PC-9 (cell line): ENCODE measurements at regions of chr12 and their contacts with region 1.

Region 1: GRCh38 chr12:32091696-32092095 is 15.0 kb upstream of the BICD1 start:
- DNase-seq: no peak
- H3K4me3 ChIP-seq: no peak overlapping the region
- H3K27ac ChIP-seq: no peak overlapping the region
- H3K4me1 ChIP-seq: peaks cover 12% of the 10 kb centered on the region
- H3K27me3 ChIP-seq: no peaks in the 10 kb centered on the region
- CTCF ChIP-seq: no peak

Region 2: GRCh38 chr12:30862486-30862885 is 1229.2 kb before region 1 on chr12:
- CTCF ChIA-PET with region 1: no interaction called
- POLR2A ChIA-PET with region 1: no interaction called
- intact Hi-C with region 1: no loop called
- DNase-seq: no peak
- H3K4me3 ChIP-seq: no peak overlapping the region
- H3K27ac ChIP-seq: no peak overlapping the region
- H3K4me1 ChIP-seq: no peaks in the 10 kb centered on the region
- H3K27me3 ChIP-seq: 0 out of 2 replicates have a peak, but pooled peaks cover 6% of the 10 kb centered on the region
- CTCF ChIP-seq: no peak

Region 3: DNA sequence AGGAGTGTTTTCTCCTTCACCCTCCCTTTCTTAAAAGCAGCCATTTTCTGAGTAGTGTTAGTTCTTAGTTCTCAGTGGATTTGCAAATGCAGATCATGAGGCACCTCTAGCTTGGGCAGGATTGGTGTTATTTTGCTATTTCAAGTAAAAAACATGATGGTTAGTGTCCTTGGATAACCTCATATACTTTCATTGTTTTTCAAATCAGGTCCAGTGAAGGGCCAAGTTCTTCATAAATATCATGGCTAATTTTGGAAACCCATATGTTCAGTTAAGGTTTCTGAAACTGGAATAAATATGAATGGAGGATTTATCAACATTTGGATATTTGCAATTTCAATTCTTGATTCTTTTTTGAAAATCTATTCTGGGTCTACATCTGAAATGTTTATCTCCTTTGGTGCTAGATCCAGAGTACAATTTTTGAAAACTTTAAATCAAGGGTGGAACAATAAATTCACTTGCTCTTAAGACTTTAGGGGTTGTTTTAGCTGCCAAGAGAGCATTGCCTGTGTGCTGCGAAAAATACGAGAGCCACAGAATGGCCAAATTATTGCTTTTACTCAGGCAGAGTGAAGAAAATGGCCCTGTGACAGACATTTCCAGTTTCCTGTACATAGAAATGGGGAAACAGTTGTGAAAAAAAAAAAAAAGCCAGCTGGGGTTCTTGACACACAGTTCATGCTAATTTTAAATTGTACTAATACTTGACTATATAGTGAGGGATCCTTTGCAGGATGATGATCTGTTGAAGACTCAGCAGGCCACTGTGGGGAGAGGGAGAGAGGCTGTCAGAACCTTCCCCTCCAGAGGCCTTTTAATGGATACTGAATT is 119.6 kb after region 1 on chr12:
- CTCF ChIA-PET with region 1: no interaction called
- POLR2A ChIA-PET with region 1: interaction called, 14 read pairs
- intact Hi-C with region 1: no loop called
- DNase-seq: no peak
- H3K4me3 ChIP-seq: no peak overlapping the region
- H3K27ac ChIP-seq: no peak overlapping the region
- H3K4me1 ChIP-seq: no peaks in the 10 kb centered on the region
- H3K27me3 ChIP-seq: no peaks in the 10 kb centered on the region
- CTCF ChIP-seq: no peak

Region 4: GRCh38 chr12:33116284-33116683 is 1024.6 kb after region 1 on chr12:
- CTCF ChIA-PET with region 1: no interaction called
- POLR2A ChIA-PET with region 1: no interaction called
- intact Hi-C with region 1: no loop called
- DNase-seq: peak in 1 of 2 experiments; percentile 9
- H3K4me3 ChIP-seq: no peak overlapping the region
- H3K27ac ChIP-seq: no peak overlapping the region
- H3K4me1 ChIP-seq: 0 out of 2 replicates have a peak, but pooled peaks cover 6% of the 10 kb centered on the region
- H3K27me3 ChIP-seq: no peaks in the 10 kb centered on the region
- CTCF ChIP-seq: no peak